ENCODE measurements at regions of chr3 and their contacts with region 1.

Region 1: GRCh38 chr3:72245183-72245811 is 460.3 kb upstream of the PROK2 start:
- DNase-seq: peak; percentile 85
- H3K4me3 ChIP-seq: no peak overlapping the region
- H3K27ac ChIP-seq: peak overlapping the region; percentile 31 to 71 (median 53)
- H3K4me1 ChIP-seq: peaks cover 0 to 50% (median 42%) of the 10 kb centered on the region in 4 donors
- H3K27me3 ChIP-seq: no peaks in the 10 kb centered on the region
- CTCF ChIP-seq: no peak
- EP300 ChIP-seq: peak in 1 of 4 donors; percentile 46
- POLR2A ChIP-seq: no peak

Region 2: DNA sequence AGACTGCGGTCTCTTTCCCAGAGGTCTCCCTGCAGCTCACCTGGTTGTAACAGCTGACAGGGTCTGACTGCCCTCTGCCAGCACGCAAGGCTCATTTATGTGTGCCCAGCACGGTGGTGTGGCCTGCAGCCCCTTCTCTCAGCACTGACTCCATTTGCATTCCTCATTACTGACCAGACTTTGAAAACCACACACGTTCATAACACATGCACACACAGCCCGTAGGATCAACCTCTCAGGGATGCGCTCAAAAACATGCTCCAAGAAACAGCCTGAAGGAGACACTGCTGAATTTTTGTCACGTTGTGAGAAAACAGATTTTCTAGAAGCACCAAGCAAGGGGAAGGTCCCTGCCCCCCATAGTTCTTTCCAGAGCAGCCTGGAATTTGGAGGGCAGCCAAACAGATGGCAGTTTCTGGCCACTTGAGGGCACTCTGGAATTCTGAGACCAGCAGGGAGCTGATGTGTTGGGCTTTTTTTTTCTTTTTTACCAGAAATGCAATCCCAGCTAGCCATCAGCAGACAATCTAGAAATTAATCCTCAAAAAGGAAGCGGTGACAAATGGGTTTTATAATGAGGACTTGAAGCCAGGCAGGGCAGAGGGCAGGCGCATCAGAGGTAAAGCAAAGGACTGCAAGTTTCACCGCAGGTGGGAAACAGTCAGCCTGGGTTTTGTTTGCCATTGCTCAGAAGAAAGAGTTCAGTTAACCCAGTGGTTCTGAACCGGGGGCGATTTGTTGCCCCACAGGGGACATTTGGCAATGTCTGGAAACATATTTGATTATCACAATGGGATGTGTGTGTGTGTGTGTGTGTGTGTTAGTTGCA is 289.8 kb before region 1 on chr3:
- intact Hi-C with region 1: loop called (anchors 10 kb)
- DNase-seq: peak; percentile 82
- H3K4me3 ChIP-seq: no peak overlapping the region
- H3K27ac ChIP-seq: no peak overlapping the region
- H3K4me1 ChIP-seq: peaks cover 0 to 12% (median 9%) of the 10 kb centered on the region in 4 donors
- H3K27me3 ChIP-seq: no peaks in the 10 kb centered on the region
- CTCF ChIP-seq: peak in 3 of 4 experiments; percentile 51 to 79 (median 65)
- EP300 ChIP-seq: no peak
- POLR2A ChIP-seq: no peak

Region 3: DNA sequence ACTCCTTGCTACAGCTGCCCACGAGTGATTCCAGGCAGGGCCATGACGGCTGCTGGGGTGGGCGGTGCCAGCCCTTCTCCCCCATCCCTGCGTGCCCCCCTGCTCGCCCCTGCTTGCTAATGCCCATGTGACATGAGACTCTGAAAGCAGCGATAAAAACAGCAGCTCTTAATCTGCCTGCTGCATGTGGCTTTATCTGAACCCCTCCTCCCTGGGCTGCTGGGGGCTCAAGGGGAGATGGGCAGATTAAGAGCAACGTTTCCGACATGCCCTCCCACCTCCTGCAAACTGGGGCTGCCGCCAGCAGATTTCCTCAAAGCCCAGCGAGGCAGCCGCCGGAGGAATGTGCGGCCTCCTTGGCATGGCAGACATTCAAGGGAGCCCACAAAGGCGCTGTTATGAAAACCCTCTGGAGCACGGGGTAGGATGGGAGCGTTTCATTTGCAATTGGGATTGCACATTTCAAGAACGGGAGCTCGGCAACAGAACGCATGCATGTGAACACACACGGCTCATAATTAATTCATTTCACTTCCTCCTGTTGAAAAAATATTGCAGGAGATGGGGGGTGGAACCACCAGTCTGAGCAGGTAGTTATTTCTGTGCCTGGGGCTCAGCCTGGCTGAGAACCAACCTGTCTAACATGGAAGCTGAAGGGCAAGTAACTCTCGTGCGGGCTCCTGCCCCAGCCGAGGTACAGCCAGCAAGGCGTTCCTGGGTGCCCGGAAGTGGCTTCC is 43.8 kb after region 1 on chr3:
- intact Hi-C with region 1: no loop called
- DNase-seq: peak; percentile 70
- H3K4me3 ChIP-seq: peak overlapping the region in 3 of 4 donors; percentile 23 to 35 (median 32)
- H3K27ac ChIP-seq: peak overlapping the region; percentile 57 to 74 (median 67)
- H3K4me1 ChIP-seq: peaks cover 0 to 24% (median 21%) of the 10 kb centered on the region in 4 donors
- H3K27me3 ChIP-seq: no peaks in the 10 kb centered on the region
- CTCF ChIP-seq: no peak
- EP300 ChIP-seq: no peak
- POLR2A ChIP-seq: no peak

Region 4: GRCh38 chr3:72665701-72666443 is 420.6 kb after region 1 on chr3:
- intact Hi-C with region 1: loop called (anchors 10 kb)
- DNase-seq: no peak
- H3K4me3 ChIP-seq: no peak overlapping the region
- H3K27ac ChIP-seq: no peak overlapping the region
- H3K4me1 ChIP-seq: peaks cover 0 to 7% (median 3%) of the 10 kb centered on the region in 4 donors
- H3K27me3 ChIP-seq: no peaks in the 10 kb centered on the region
- CTCF ChIP-seq: peak in 2 of 4 experiments; percentile 21 to 27
- EP300 ChIP-seq: no peak
- POLR2A ChIP-seq: no peak